CD4-positive, alpha-beta memory T cell (primary cell): ENCODE measurements at regions of chr7 and their contacts with region 1.

Region 1: DNA sequence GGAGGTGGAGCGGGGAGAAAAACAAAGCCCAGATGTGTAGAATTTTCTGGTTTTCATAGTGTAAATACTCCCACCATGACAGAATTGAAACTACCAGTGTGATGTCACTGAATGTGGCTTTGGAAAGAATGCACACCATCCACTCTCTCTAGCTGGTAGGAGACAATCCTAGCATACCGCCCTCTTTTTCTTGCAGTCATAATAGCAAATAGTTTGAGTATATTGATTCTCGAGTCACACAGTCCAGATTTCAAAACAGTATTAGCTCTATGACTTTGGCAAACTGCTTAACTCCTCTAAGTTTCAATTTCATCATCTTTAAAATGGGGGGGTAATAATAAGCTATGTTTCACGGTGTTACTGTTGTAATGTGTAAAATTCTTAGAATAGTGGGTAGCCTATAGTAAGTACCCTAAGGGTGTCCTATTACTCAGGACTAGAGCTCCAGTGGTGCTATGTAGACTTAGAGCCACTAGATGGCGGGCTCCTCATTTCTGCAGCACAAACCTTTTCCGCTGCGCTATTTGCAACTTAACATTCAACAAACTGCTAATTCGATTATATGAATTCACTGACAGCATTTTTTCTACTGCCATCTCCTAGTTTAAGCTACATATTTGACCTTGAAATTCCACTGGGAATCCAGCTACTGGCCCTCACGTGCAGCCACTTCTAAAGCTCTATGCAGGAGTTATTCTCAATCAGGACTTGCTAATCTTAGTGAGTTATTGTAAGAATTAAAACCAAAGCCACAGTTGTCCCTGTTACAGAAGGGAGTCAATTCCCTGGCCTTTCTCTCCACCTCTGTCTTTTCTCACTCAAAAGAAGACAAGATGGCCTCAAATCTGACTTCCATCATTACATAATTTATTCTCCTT is 18.7 kb downstream of the TAS2R40 start:
- DNase-seq: peak; percentile 74 to 79 (median 77)
- H3K4me3 ChIP-seq: no peak overlapping the region
- H3K4me3 Mint-ChIP-seq: peak overlapping the region in 3 of 8 donors; percentile 30 to 57 (median 37)
- H3K27ac ChIP-seq: no peak overlapping the region
- H3K27ac Mint-ChIP-seq: peak overlapping the region in 5 of 7 donors; percentile 14 to 77 (median 48)
- H3K4me1 ChIP-seq: peaks cover 24% of the 10 kb centered on the region
- H3K4me1 Mint-ChIP-seq: peaks cover 24 to 40% (median 31%) of the 10 kb centered on the region in 4 donors
- H3K27me3 ChIP-seq: peaks cover 6% of the 10 kb centered on the region
- H3K27me3 Mint-ChIP-seq: peaks cover 2 to 11% of the 10 kb centered on the region in 2 donors

Region 2: GRCh38 chr7:143172354-143172753 is 68.2 kb before region 1 on chr7:
- CTCF ChIA-PET with region 1: no interaction called
- POLR2A ChIA-PET with region 1: no interaction called
- intact Hi-C with region 1: no loop called
- DNase-seq: no peak
- H3K4me3 ChIP-seq: no peak overlapping the region
- H3K4me3 Mint-ChIP-seq: peak overlapping the region in 1 of 8 donors; percentile 26
- H3K27ac ChIP-seq: no peak overlapping the region
- H3K27ac Mint-ChIP-seq: no peak overlapping the region
- H3K4me1 ChIP-seq: no peaks in the 10 kb centered on the region
- H3K4me1 Mint-ChIP-seq: no peaks in the 10 kb centered on the region
- H3K27me3 ChIP-seq: no peaks in the 10 kb centered on the region
- H3K27me3 Mint-ChIP-seq: peaks cover 12 to 16% of the 10 kb centered on the region in 2 donors

Region 3: DNA sequence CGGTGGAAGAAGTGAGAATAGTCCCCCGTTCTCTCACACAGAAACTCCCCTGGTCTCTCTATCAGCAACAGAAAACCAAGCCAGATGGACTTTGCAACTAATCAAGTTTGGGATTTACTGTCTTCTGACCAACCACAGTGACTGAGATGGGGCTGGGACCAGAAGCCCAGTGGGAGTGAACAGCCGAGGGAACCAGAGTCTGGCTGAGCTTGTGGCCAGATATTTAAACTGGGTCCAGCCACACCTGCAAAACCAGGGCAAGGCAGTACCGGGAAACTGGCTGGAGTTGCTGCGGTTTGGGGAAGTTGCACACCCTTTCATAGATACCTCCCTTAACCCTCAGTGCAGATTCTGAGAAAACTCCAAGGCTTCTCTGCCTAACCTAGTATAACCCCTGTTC is 28.7 kb after region 1 on chr7:
- CTCF ChIA-PET with region 1: interaction called, 252 read pairs
- POLR2A ChIA-PET with region 1: interaction called, 33 read pairs
- intact Hi-C with region 1: no loop called
- DNase-seq: no peak
- H3K4me3 ChIP-seq: no peak overlapping the region
- H3K4me3 Mint-ChIP-seq: peak overlapping the region in 1 of 8 donors; percentile 7
- H3K27ac ChIP-seq: no peak overlapping the region
- H3K27ac Mint-ChIP-seq: peak overlapping the region in 6 of 7 donors; percentile 19 to 94 (median 69)
- H3K4me1 ChIP-seq: peaks cover 51% of the 10 kb centered on the region
- H3K4me1 Mint-ChIP-seq: peaks cover 24 to 49% (median 36%) of the 10 kb centered on the region in 4 donors
- H3K27me3 ChIP-seq: no peaks in the 10 kb centered on the region
- H3K27me3 Mint-ChIP-seq: no peaks in the 10 kb centered on the region

Region 4: DNA sequence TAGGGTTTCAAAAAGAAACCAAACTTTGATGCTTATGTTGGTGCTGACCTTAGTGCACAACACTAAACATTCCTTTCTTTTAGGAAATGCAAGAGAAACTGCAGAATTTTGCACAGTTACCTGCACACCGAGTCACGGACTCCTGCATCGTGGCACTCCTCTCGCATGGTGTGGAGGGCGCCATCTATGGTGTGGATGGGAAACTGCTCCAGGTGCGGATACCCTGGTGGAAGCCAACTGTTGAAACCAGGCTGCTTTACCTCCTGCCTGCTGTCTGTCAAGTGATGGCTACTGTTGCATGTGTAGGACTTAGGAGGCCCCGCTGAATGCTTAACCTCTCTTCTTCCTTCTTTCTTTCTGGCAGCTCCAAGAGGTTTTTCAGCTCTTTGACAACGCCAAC is 59.3 kb after region 1 on chr7:
- CTCF ChIA-PET with region 1: interaction called, 513 read pairs
- POLR2A ChIA-PET with region 1: interaction called, 51 read pairs
- intact Hi-C with region 1: loop called (anchors 1 kb)
- DNase-seq: peak; percentile 61 to 70 (median 68)
- H3K4me3 ChIP-seq: no peak overlapping the region
- H3K4me3 Mint-ChIP-seq: peak overlapping the region in 5 of 8 donors; percentile 26 to 50 (median 30)
- H3K27ac ChIP-seq: no peak overlapping the region
- H3K27ac Mint-ChIP-seq: peak overlapping the region; percentile 14 to 78 (median 56)
- H3K4me1 ChIP-seq: peaks cover 31% of the 10 kb centered on the region
- H3K4me1 Mint-ChIP-seq: peaks cover 32 to 44% (median 39%) of the 10 kb centered on the region in 4 donors
- H3K27me3 ChIP-seq: no peaks in the 10 kb centered on the region
- H3K27me3 Mint-ChIP-seq: no peaks in the 10 kb centered on the region

Region 5: DNA sequence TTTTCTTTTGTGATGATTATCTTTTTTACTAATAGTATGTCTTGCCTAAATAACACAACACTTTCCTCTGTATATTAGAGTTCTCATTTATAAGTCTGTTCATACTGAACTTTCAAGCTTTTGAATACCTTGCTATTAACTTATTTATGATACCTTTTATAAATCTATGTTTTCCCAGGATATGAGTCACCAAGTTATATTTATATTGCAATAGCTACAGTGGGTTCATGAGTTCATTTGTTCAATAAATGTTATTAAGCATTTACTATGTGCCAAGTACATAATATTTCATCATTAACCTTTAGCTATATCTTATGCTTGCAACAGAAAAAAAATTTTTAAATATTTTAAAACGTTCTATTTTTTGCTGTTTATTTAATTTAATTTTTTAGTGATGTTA is 93.7 kb after region 1 on chr7:
- CTCF ChIA-PET with region 1: interaction called, 14 read pairs
- POLR2A ChIA-PET with region 1: no interaction called
- intact Hi-C with region 1: no loop called
- DNase-seq: no peak
- H3K4me3 ChIP-seq: no peak overlapping the region
- H3K4me3 Mint-ChIP-seq: no peak overlapping the region
- H3K27ac ChIP-seq: no peak overlapping the region
- H3K27ac Mint-ChIP-seq: no peak overlapping the region
- H3K4me1 ChIP-seq: no peaks in the 10 kb centered on the region
- H3K4me1 Mint-ChIP-seq: peaks cover 0 to 4% (median 0%) of the 10 kb centered on the region in 4 donors
- H3K27me3 ChIP-seq: no peaks in the 10 kb centered on the region
- H3K27me3 Mint-ChIP-seq: peaks cover 12 to 17% of the 10 kb centered on the region in 2 donors

Region 6: GRCh38 chr7:143380255-143380645 is 139.7 kb after region 1 on chr7:
- CTCF ChIA-PET with region 1: interaction called, 23 read pairs
- POLR2A ChIA-PET with region 1: interaction called, 21 read pairs
- intact Hi-C with region 1: loop called (anchors 2 kb)
- DNase-seq: peak; percentile 83 to 88 (median 84)
- H3K4me3 ChIP-seq: peak overlapping the region; percentile 72 to 97
- H3K4me3 Mint-ChIP-seq: peak overlapping the region; percentile 91 to 95 (median 92)
- H3K27ac ChIP-seq: peak overlapping the region; percentile 91
- H3K27ac Mint-ChIP-seq: peak overlapping the region; percentile 92 to 99 (median 96)
- H3K4me1 ChIP-seq: peaks cover 70% of the 10 kb centered on the region
- H3K4me1 Mint-ChIP-seq: peaks cover 38 to 48% (median 44%) of the 10 kb centered on the region in 4 donors
- H3K27me3 ChIP-seq: no peaks in the 10 kb centered on the region
- H3K27me3 Mint-ChIP-seq: no peaks in the 10 kb centered on the region

Region 7: GRCh38 chr7:143416565-143417149 is 176.1 kb after region 1 on chr7:
- CTCF ChIA-PET with region 1: interaction called, 104 read pairs
- POLR2A ChIA-PET with region 1: interaction called, 6 read pairs
- intact Hi-C with region 1: loop called (anchors 1 kb)
- DNase-seq: peak in 4 of 5 donors; percentile 47 to 62 (median 53)
- H3K4me3 ChIP-seq: no peak overlapping the region
- H3K4me3 Mint-ChIP-seq: no peak overlapping the region
- H3K27ac ChIP-seq: no peak overlapping the region
- H3K27ac Mint-ChIP-seq: no peak overlapping the region
- H3K4me1 ChIP-seq: no peaks in the 10 kb centered on the region
- H3K4me1 Mint-ChIP-seq: peaks cover 0 to 9% (median 8%) of the 10 kb centered on the region in 4 donors
- H3K27me3 ChIP-seq: no peaks in the 10 kb centered on the region
- H3K27me3 Mint-ChIP-seq: no peaks in the 10 kb centered on the region